ENCODE measurements at regions of chr3 and their contacts with region 1.

Region 1: DNA sequence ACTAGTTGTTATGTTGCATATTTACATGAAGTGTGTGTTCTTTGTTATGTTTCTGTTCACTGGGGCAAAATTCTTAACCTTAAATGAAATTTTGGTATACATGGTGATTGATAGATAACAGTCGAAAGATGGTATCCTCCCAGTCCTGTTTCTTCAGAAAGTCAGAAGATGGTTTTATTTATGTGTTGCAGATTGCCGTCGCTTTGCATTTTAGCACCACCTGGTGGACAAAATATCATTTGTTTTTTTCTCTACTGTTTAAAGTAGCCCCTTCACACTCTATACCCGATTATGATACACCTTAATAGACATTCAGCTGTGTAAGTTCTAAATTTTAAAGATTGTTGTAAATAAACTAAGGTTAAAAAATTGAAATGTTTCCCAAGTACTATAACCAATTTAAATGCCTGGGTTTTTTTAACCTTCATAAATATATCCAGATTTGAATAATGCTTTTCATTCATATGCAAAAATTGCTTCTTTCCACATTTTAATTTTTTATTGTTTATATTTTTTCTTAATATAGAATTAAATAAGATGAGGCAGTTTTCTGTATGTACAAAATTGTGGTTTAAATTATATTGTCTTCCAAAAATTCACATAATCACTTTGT is 152.2 kb downstream of the ALCAM start:
- DNase-seq: peak; percentile 71
- H3K4me3 ChIP-seq: no peak overlapping the region
- H3K27ac ChIP-seq: no peak overlapping the region
- H3K4me1 ChIP-seq: peaks cover 24% of the 10 kb centered on the region
- H3K27me3 ChIP-seq: no peaks in the 10 kb centered on the region

Region 2: GRCh38 chr3:104604369-104605010 is 914.4 kb before region 1 on chr3:
- in situ Hi-C with region 1: loop called (anchors 25 kb)
- DNase-seq: peak; percentile 53
- H3K4me3 ChIP-seq: 0 out of 2 replicates have a peak overlapping the region, but pooled peaks have one; percentile 39
- H3K27ac ChIP-seq: no peak overlapping the region
- H3K4me1 ChIP-seq: no peaks in the 10 kb centered on the region
- H3K27me3 ChIP-seq: no peaks in the 10 kb centered on the region

Region 3: GRCh38 chr3:105108823-105109222 is 410.1 kb before region 1 on chr3:
- in situ Hi-C with region 1: no loop called
- DNase-seq: no peak
- H3K4me3 ChIP-seq: no peak overlapping the region
- H3K27ac ChIP-seq: no peak overlapping the region
- H3K4me1 ChIP-seq: no peaks in the 10 kb centered on the region
- H3K27me3 ChIP-seq: no peaks in the 10 kb centered on the region; the same call in none of the 2 replicates

Region 4: DNA sequence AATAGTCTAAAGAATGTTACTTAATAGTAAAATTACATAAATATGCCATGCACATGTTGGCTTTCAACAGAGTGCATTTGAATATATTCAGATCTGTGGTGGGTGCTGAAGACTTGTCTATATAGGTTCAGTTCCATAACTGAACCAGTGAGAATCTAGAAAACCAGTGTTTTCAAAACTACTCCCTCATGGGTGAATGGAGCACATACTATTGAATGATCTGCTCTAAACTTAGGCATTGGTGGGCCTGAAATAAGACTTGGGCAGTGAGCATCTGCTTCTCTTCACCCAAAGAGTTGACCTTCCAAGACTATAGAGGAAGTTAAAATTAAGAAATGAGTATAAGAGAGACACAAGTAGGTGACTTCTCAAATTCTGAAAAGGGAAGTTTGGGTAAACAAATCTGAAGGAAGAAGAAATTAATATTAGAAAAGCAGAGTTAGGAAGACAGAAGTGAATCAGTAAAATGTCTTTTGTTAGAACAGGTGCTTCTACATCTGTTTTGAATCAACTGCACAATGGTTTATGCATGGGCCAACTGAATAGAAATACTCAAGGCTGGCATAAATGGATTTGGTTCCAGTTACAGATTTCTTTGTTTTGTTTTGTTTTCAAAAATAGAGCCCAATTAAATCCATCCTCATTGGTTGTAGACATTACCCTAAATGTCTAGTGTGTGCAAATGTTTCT is 132.9 kb before region 1 on chr3:
- in situ Hi-C with region 1: loop called (anchors 10 kb)
- DNase-seq: no peak
- H3K4me3 ChIP-seq: peak overlapping the region; percentile 54
- H3K27ac ChIP-seq: peak overlapping the region; percentile 20
- H3K4me1 ChIP-seq: peaks cover 48% of the 10 kb centered on the region
- H3K27me3 ChIP-seq: no peaks in the 10 kb centered on the region